ENCODE measurements at regions of chr17 and their contacts with region 1.

Region 1: DNA sequence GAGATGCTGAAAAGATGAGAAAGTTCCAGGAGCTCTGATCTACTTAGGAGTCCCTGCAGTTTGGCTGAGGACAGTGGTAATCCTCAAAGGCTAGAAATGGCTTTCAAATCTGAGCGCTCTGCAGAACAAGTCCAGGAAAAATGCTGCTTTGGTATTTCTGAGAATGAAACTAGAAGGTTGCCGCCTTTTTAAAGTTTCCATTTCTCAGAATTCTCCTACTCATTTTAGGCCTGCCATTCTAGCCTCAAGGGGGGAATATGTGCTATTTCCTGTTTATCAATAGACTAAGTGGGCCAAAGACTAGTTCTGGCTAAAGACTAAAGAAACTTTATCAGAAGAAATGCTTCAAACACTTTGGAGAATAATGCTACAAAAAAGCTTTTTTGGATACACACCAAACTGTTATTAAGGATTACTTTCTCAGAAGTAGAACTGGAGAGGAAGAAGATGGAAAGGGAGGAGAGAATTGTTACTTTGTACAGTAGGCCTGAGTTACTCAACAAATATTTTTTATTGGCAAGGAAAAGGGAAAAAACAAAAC is at the start of gene SLFN12L:
- DNase-seq: peak; percentile 61
- H3K4me3 Mint-ChIP-seq: peak within 1 kb of the TSS; percentile 85
- H3K27ac Mint-ChIP-seq: peak within 1 kb of the TSS; percentile 100
- H3K4me1 Mint-ChIP-seq: peaks cover 54% of the 10 kb centered on the region
- H3K27me3 Mint-ChIP-seq: no peaks in the 10 kb centered on the region
- total RNA-seq, gene SLFN12L: 45.2 and 49.3 TPM in 2 replicates

Region 2: DNA sequence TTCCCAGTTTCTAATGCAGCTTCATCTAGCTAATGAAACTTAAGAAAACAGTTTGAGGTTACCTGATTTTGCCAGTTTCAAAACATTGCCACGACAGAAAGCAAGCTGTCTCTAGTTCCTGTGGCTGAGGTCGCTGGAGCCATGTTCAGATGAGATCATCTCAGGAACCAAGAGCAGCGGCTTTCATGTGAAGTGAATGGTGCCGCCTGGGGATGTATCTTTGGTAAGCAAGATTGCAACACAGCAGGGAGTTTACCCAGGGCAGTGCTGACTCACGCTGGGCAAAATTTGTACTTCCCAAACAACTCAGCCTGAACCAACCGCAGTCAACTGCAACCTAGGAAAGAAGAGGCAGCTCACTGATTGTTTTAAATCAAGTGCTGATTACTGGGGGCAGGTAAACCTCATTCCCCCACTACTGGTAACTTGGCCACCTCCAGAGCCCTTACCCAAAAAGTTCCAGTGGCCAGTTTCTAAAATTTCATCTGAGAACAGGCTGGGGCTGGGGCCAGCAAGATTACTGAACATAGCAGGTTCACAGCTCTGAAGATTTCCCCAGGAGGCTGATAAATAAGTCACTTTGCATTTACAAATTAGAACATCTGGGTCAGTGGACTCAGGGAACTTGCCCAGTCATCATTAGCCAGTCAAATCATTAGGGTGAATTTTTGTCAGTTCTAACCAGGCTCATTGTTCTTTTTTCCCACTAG is 474.0 kb before region 1 on chr17 and contains the start of gene RFFL:
- intact Hi-C with region 1: loop called (anchors 10 kb)
- DNase-seq: peak; percentile 88
- H3K4me3 Mint-ChIP-seq: peak within 1 kb of the TSS; percentile 49
- H3K27ac Mint-ChIP-seq: peak within 1 kb of the TSS; percentile 87
- H3K4me1 Mint-ChIP-seq: peaks cover 66% of the 10 kb centered on the region
- H3K27me3 Mint-ChIP-seq: no peaks in the 10 kb centered on the region
- total RNA-seq, gene RFFL: 28.1 and 28.2 TPM in 2 replicates

Region 3: GRCh38 chr17:35161281-35161761 is 376.4 kb before region 1 on chr17:
- intact Hi-C with region 1: no loop called
- DNase-seq: no peak
- H3K4me3 Mint-ChIP-seq: peak overlapping the region; percentile 62
- H3K27ac Mint-ChIP-seq: peak overlapping the region; percentile 32
- H3K4me1 Mint-ChIP-seq: peaks cover 39% of the 10 kb centered on the region
- H3K27me3 Mint-ChIP-seq: peaks cover 4% of the 10 kb centered on the region

Region 4: GRCh38 chr17:35214631-35215273 is 322.9 kb before region 1 on chr17:
- intact Hi-C with region 1: loop called (anchors 1 kb)
- DNase-seq: peak; percentile 12
- H3K4me3 Mint-ChIP-seq: peak overlapping the region; percentile 40
- H3K27ac Mint-ChIP-seq: peak overlapping the region; percentile 92
- H3K4me1 Mint-ChIP-seq: peaks cover 85% of the 10 kb centered on the region
- H3K27me3 Mint-ChIP-seq: no peaks in the 10 kb centered on the region

Region 5: DNA sequence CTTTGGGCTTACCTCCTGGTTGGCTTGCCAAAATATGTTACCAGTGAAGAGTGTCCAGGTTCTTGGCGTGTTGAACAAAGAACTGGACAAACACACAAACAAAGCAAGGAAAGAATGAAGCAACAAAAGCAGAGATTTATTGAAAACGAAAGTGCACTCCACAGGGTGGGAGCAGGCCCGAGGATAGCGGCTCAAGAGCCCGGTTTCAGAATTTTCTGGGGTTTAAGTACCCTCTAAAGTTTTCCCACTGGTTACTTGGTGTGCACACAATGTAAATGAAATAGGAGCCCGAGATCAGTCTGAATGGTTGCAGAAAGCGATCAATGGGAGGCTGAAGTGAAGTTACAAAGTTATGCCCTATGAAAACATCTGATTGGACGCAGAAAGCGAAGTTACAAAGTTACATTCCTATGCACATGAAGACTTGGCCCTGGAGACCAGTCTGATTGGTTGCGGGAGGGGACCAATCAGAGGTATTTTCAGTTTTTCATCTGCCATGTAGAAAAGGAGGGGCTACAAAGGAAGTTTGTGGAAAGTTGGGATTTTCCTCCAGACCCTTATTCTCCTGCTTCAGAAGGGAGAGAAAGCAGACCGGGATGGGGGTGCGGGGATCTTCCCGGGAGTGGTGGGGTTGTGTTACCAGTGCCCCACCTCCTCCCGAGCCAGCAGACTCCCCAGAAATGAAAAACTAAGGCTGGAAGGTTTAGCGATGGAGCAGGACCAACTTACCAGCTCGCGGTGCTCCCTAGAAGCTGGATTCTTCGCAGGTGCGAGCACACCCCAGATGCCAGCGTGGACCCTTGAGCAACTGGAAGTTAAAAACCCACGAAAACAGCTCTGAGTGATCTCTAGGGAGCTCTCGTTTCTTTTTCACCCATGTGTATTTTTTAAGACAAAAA is 105.2 kb before region 1 on chr17 and contains the start of gene SLFN12:
- intact Hi-C with region 1: loop called (anchors 1 kb)
- DNase-seq: peak; percentile 36
- H3K4me3 Mint-ChIP-seq: peak within 1 kb of the TSS; percentile 86
- H3K27ac Mint-ChIP-seq: peak within 1 kb of the TSS; percentile 87
- H3K4me1 Mint-ChIP-seq: peaks cover 51% of the 10 kb centered on the region
- H3K27me3 Mint-ChIP-seq: no peaks in the 10 kb centered on the region
- total RNA-seq, gene SLFN12: 6.6 and 8.4 TPM in 2 replicates

Region 6: DNA sequence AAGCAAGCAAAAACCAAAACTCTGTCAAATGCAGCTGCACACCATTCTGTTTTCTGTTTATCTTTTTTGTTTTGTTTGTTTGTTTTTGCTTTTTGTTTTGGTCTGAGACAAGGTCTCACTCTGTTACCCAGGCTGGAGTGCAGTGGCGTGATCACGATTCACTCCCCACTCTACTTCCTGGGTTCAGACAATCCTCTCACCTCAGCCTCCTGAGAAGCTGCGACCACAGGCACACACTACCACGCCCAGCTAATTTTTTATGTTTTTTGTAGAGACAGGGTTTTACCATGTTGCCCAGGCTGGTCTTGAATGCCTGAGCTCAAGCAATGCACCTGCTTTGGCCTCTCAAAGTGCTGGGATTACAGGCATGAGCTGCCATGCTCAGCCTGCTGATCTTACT is 69.8 kb before region 1 on chr17:
- intact Hi-C with region 1: no loop called
- DNase-seq: peak; percentile 40
- H3K4me3 Mint-ChIP-seq: peak overlapping the region; percentile 38
- H3K27ac Mint-ChIP-seq: peak overlapping the region; percentile 55
- H3K4me1 Mint-ChIP-seq: peaks cover 33% of the 10 kb centered on the region
- H3K27me3 Mint-ChIP-seq: no peaks in the 10 kb centered on the region

Region 7: GRCh38 chr17:35521150-35521549 is 16.5 kb before region 1 on chr17:
- intact Hi-C with region 1: loop called (anchors 2 kb)
- DNase-seq: no peak
- H3K4me3 Mint-ChIP-seq: peak overlapping the region; percentile 71
- H3K27ac Mint-ChIP-seq: peak overlapping the region; percentile 70
- H3K4me1 Mint-ChIP-seq: peaks cover 100% of the 10 kb centered on the region
- H3K27me3 Mint-ChIP-seq: no peaks in the 10 kb centered on the region

Region 8: DNA sequence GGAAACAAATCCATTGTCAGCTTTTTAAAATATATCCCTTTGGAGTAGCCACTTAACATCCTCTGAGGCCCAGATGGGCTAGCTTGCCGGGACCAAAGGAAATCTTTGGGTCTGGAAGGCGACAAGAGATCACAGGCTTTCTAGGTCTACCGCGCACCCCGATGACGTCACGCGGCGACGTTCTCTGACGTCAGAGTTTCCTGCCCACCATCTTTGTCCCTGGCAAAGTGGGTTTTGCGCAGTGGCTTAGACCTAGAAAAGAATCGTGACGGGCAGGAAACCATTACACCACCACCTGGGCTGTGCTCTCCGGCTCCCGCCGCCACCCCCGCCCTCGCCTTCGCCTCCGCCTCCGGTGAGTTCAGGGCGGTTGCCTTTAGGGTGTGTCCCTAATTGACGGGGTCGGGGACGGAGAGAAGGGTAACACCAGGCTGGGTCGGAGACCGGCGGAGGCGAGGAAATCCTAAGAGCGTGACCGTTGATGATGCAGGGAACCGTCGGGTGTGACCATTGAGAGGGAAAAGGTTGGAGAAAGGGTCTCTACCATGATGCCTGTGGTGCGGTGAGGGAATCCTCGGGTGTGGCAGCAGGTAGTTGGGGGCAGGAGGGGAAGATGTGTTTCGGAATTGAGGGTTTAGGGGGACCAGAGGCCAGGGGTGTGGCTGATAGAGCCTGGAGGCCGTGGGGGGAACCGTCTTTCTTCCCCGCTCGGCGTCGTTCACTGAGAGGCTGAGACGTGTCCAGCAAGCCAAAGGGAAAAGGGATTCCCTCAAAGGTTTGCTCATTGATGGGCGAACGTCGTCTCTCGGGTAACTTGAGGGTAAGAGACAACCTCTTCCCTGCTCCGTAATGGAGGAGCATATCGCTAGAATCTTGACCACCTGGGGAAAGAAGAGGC is 49.7 kb after region 1 on chr17 and contains the start of gene AP2B1:
- intact Hi-C with region 1: loop called (anchors 1 kb)
- DNase-seq: peak; percentile 96
- H3K4me3 Mint-ChIP-seq: peak within 1 kb of the TSS; percentile 94
- H3K27ac Mint-ChIP-seq: peak within 1 kb of the TSS; percentile 96
- H3K4me1 Mint-ChIP-seq: peaks cover 38% of the 10 kb centered on the region
- H3K27me3 Mint-ChIP-seq: peaks cover 3% of the 10 kb centered on the region
- total RNA-seq, gene AP2B1: 156 and 167 TPM in 2 replicates

Region 9: DNA sequence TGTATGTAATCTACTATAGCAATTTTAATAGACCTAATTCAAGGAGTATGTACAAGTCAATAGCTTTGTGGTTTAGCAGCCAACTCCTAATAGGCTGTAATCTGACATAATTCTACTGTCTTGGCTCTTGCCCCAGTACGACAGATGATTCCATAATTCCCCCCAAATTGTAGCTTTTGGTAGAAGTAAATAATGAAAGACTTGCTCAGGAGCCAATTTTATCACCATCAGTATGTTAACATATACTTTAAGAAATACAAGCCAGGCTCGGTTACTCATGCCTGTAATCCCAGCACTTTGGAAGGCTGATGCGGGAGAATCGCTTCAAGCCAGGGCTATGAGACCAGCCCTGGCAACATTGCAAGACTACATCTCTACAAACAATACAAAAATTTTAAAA is 103.4 kb after region 1 on chr17:
- intact Hi-C with region 1: no loop called
- DNase-seq: no peak
- H3K4me3 Mint-ChIP-seq: no peak overlapping the region
- H3K27ac Mint-ChIP-seq: no peak overlapping the region
- H3K4me1 Mint-ChIP-seq: peaks cover 5% of the 10 kb centered on the region
- H3K27me3 Mint-ChIP-seq: no peaks in the 10 kb centered on the region